PC-9 (cell line): ENCODE measurements at regions of chr7 and their contacts with region 1.

Region 1: GRCh38 chr7:134527979-134528371 is 608 bp downstream of the AKR1B10 start:
- DNase-seq: peak; percentile 37 to 56
- H3K4me3 ChIP-seq: peak overlapping the region; percentile 87
- H3K27ac ChIP-seq: peak overlapping the region; percentile 96
- H3K4me1 ChIP-seq: peaks cover 54% of the 10 kb centered on the region
- H3K27me3 ChIP-seq: no peaks in the 10 kb centered on the region
- CTCF ChIP-seq: no peak

Region 2: GRCh38 chr7:134480736-134481135 is 47.2 kb before region 1 on chr7:
- CTCF ChIA-PET with region 1: interaction called, 9 read pairs
- POLR2A ChIA-PET with region 1: interaction called, 4 read pairs
- intact Hi-C with region 1: loop called (anchors 1 kb)
- DNase-seq: peak; percentile 59 to 94
- H3K4me3 ChIP-seq: peak overlapping the region; percentile 37; the same call in 1 of the 2 replicates
- H3K27ac ChIP-seq: peak overlapping the region; percentile 88
- H3K4me1 ChIP-seq: peaks cover 65% of the 10 kb centered on the region
- H3K27me3 ChIP-seq: no peaks in the 10 kb centered on the region
- CTCF ChIP-seq: no peak

Region 3: DNA sequence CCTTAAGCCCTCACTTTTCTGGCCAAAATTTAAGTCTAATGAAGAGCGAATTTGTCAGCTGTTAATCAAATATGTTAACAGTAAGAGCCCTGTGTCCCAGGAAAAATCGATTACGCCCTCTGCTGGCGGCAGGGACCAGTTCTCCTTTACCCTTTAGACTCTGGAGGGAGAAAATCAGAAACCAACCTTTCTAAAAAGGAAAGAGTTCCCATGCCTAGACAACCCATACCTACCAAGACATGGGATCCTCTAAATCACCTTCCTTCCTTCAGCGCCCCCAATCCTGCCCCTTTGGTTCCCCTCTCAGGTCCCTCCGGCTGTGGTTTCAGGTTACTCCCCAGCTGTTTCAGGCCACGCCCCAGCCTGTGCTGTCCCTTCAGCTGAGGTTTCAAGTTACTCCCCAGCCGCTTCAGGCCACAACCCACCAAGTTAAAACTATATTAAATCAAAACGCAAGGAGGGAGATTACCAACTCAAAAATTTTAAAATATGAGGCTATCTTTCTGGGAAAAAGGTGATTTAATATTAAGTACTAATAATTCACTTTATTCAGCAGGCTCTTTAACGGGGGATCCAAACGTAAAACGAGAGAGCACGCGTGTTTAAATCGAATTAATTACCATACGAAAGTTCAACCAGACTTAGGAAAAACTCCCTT is 19.6 kb after region 1 on chr7:
- CTCF ChIA-PET with region 1: interaction called, 3 read pairs
- POLR2A ChIA-PET with region 1: interaction called, 11 read pairs
- intact Hi-C with region 1: loop called (anchors 1 kb)
- DNase-seq: peak; percentile 75 to 77
- H3K4me3 ChIP-seq: peak overlapping the region; percentile 20; the same call in 1 of the 2 replicates
- H3K27ac ChIP-seq: peak overlapping the region; percentile 84
- H3K4me1 ChIP-seq: peaks cover 42% of the 10 kb centered on the region
- H3K27me3 ChIP-seq: no peaks in the 10 kb centered on the region
- CTCF ChIP-seq: peak; percentile 97

Region 4: GRCh38 chr7:134562136-134562535 is 34.2 kb after region 1 on chr7:
- CTCF ChIA-PET with region 1: no interaction called
- POLR2A ChIA-PET with region 1: no interaction called
- intact Hi-C with region 1: loop called (anchors 1 kb)
- DNase-seq: no peak
- H3K4me3 ChIP-seq: no peak overlapping the region
- H3K27ac ChIP-seq: peak overlapping the region; percentile 95
- H3K4me1 ChIP-seq: peaks cover 43% of the 10 kb centered on the region
- H3K27me3 ChIP-seq: no peaks in the 10 kb centered on the region
- CTCF ChIP-seq: no peak

Region 5: GRCh38 chr7:134891262-134891695 is 363.3 kb after region 1 on chr7:
- CTCF ChIA-PET with region 1: no interaction called
- POLR2A ChIA-PET with region 1: interaction called, 11 read pairs
- intact Hi-C with region 1: no loop called
- DNase-seq: peak; percentile 85 to 89
- H3K4me3 ChIP-seq: peak overlapping the region; percentile 63
- H3K27ac ChIP-seq: peak overlapping the region; percentile 43
- H3K4me1 ChIP-seq: peaks cover 43% of the 10 kb centered on the region
- H3K27me3 ChIP-seq: no peaks in the 10 kb centered on the region
- CTCF ChIP-seq: no peak

Region 6: GRCh38 chr7:135519233-135519688 is 991.3 kb after region 1 on chr7:
- CTCF ChIA-PET with region 1: no interaction called
- POLR2A ChIA-PET with region 1: no interaction called
- intact Hi-C with region 1: no loop called
- DNase-seq: no peak
- H3K4me3 ChIP-seq: no peak overlapping the region
- H3K27ac ChIP-seq: no peak overlapping the region
- H3K4me1 ChIP-seq: no peaks in the 10 kb centered on the region
- H3K27me3 ChIP-seq: no peaks in the 10 kb centered on the region
- CTCF ChIP-seq: no peak